Naive thymus-derived CD4-positive, alpha-beta T cell (primary cell): ENCODE measurements at regions of chr3 and their contacts with region 1.

Region 1: GRCh38 chr3:69212411-69213139 is 90.2 kb upstream of the LMOD3 start:
- DNase-seq: no peak
- ATAC-seq: peak; percentile 82
- H3K4me3 ChIP-seq: no peak overlapping the region
- H3K4me3 Mint-ChIP-seq: peak overlapping the region in 1 of 10 donors; percentile 67
- H3K27ac ChIP-seq: no peak overlapping the region
- H3K27ac Mint-ChIP-seq: peak overlapping the region in 3 of 9 donors; percentile 25 to 85 (median 29)
- H3K4me1 ChIP-seq: peaks cover 0 to 6% of the 10 kb centered on the region in 2 donors
- H3K4me1 Mint-ChIP-seq: peaks cover 0 to 50% (median 0%) of the 10 kb centered on the region in 7 donors
- H3K27me3 ChIP-seq: no peaks in the 10 kb centered on the region
- H3K27me3 Mint-ChIP-seq: no peaks in the 10 kb centered on the region

Region 2: DNA sequence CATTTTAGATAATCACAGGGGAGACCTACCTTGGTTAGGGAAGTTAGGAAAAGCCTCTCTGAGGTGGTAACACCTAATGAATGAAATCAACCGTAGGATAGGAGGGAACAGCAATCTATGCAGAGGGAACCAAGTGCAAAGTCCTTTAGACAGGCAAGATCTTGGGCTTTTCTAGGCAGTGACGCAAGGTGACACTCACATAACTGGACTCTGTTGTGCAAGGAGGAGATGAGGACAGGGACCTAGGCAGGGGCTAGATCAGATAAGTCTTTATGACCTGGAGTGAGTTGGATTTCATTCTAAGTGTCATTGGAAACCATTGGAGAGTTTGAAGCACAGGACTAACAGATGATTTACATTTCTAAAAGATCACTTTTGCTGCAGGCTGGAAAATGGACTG is 85.6 kb before region 1 on chr3:
- CTCF ChIA-PET with region 1: no interaction called
- POLR2A ChIA-PET with region 1: no interaction called
- intact Hi-C with region 1: no loop called
- DNase-seq: no peak
- ATAC-seq: no peak
- H3K4me3 ChIP-seq: no peak overlapping the region
- H3K4me3 Mint-ChIP-seq: no peak overlapping the region
- H3K27ac ChIP-seq: no peak overlapping the region
- H3K27ac Mint-ChIP-seq: no peak overlapping the region
- H3K4me1 ChIP-seq: no peaks in the 10 kb centered on the region
- H3K4me1 Mint-ChIP-seq: no peaks in the 10 kb centered on the region
- H3K27me3 ChIP-seq: no peaks in the 10 kb centered on the region
- H3K27me3 Mint-ChIP-seq: peaks cover 0 to 21% (median 3%) of the 10 kb centered on the region in 5 donors

Region 3: GRCh38 chr3:69236812-69237707 is 24.5 kb after region 1 on chr3:
- CTCF ChIA-PET with region 1: no interaction called
- POLR2A ChIA-PET with region 1: no interaction called
- intact Hi-C with region 1: loop called in 1 of 2 experiments (anchors 2 kb)
- DNase-seq: peak in 1 of 9 donors; percentile 5
- ATAC-seq: no peak
- H3K4me3 ChIP-seq: no peak overlapping the region
- H3K4me3 Mint-ChIP-seq: peak overlapping the region in 8 of 10 donors; percentile 58 to 78 (median 68)
- H3K27ac ChIP-seq: no peak overlapping the region
- H3K27ac Mint-ChIP-seq: peak overlapping the region in 8 of 9 donors; percentile 1 to 80 (median 42)
- H3K4me1 ChIP-seq: peaks cover 5 to 17% of the 10 kb centered on the region in 2 donors
- H3K4me1 Mint-ChIP-seq: peaks cover 9 to 33% (median 19%) of the 10 kb centered on the region in 7 donors
- H3K27me3 ChIP-seq: no peaks in the 10 kb centered on the region
- H3K27me3 Mint-ChIP-seq: no peaks in the 10 kb centered on the region